SK-N-SH (cell line): ENCODE measurements at regions of chr1 and their contacts with region 1.

Region 1: GRCh38 chr1:110780600-110781484 is 92.1 kb upstream of the CD53 start:
- DNase-seq: peak; percentile 69
- H3K4me3 ChIP-seq: no peak overlapping the region; a peak in 1 of 4 replicates
- H3K27ac ChIP-seq: no peak overlapping the region
- H3K4me1 ChIP-seq: no peaks in the 10 kb centered on the region; a peak in 1 of 4 replicates
- H3K27me3 ChIP-seq: no peaks in the 10 kb centered on the region; the same call in 1 of the 2 replicates
- CTCF ChIP-seq: peak; percentile 75
- EP300 ChIP-seq: no peak
- RAD21 ChIP-seq: peak; percentile 79

Region 2: GRCh38 chr1:110214516-110215379 is 566.1 kb before region 1 on chr1:
- CTCF ChIA-PET with region 1: no interaction called
- POLR2A ChIA-PET with region 1: no interaction called
- DNase-seq: peak; percentile 57
- H3K4me3 ChIP-seq: no peak overlapping the region
- H3K27ac ChIP-seq: peak overlapping the region in 1 of 2 experiments; percentile 11; a peak in 1 of 4 replicates
- H3K4me1 ChIP-seq: peaks cover 0 to 52% of the 10 kb centered on the region in 2 experiments; a peak in 2 of 4 replicates
- H3K27me3 ChIP-seq: peaks cover 23% of the 10 kb centered on the region
- CTCF ChIP-seq: no peak
- EP300 ChIP-seq: no peak
- RAD21 ChIP-seq: no peak

Region 3: DNA sequence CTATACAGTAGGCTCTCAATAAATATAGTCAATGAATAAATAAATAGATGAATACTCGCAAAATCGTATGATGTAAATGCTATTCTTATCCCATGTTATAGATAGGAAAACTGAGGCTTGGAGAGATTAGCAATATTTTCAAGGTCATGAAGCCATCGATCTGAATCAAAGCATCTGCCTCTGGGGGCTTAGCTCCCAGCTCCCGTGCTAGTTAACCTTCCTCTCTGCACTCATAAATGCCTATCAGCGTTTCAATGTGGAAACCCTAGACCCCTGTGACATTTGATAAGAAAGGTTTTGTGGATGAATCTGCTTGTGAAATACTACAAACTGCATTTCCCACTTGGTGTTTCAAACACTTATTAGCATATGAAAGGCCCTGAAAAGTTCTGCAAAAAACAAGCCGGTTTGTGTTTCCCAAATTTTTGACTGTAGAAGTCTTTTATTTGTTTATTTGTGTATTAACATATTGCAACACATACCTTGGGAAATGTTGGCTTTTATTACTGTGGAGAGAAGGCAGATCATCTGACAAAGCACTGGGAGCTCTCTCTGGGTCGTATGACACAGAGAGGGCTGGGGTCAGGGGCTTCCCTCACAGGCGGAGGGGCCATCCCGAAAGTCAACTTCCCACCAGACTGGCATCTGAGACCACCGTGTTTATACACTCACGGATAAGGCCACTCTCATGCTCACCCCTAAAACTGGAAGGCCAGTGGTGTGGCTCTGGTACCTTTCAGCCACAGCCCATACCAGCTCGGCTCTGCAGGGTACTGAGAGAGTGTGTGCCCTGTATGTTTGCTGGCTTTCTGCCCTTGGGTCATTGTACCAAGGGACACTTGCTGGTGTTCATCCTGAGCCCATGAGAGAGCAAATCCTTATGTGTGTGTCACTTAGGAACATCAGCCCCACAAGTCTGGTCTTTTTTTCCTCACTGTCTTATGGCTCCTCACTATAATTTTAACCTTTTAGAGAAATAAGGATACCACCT is 330.9 kb before region 1 on chr1:
- CTCF ChIA-PET with region 1: no interaction called
- POLR2A ChIA-PET with region 1: no interaction called
- DNase-seq: no peak
- H3K4me3 ChIP-seq: no peak overlapping the region
- H3K27ac ChIP-seq: no peak overlapping the region
- H3K4me1 ChIP-seq: no peaks in the 10 kb centered on the region
- H3K27me3 ChIP-seq: peaks cover 52% of the 10 kb centered on the region
- CTCF ChIP-seq: no peak
- EP300 ChIP-seq: no peak
- RAD21 ChIP-seq: no peak

Region 4: DNA sequence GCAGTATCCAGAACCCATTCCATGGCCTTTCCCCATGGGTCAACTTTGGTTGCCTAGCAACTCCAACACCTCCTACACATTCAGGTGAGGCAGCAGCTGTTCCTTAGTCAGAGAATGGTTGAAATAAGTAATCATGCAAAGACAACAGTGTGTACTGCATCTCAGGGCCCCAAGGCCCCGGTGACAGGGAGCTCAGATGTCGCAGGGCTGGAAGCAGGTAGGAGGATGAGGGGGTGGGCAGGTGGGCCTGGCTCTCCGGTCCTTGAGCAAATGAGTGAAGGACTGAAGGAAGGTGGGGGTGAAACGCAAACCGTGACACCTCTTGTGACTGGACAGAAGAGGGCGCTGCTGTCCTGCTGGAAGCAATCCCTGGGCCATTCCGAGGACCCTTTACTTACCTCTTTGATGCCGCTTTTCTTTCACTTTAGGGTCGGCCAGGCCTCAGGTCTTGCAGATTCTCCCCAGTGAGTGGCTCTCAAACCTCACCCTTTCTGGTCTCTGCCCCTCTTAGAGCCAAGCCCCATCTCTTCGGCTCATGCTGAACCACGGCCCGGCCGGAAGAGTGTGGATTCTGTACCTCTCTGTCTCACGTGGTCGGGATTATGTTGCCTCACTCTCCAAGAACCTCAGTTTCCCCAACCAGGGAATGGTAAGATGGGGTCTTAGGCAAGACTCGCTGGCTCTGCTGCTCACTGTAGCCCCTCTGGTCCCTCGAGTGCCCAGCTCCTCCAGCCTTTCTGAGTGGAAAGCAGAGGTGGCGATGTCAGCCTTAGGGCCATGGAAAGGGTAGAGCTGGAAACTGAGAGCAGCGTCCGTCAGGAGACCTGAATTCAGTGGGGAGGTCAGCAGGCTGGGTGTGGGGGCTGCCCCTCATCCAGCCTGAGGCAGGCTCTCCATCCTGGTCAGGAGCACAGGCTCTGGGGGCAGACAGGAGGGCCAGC is 256.3 kb before region 1 on chr1:
- CTCF ChIA-PET with region 1: interaction called, 63 read pairs
- POLR2A ChIA-PET with region 1: no interaction called
- DNase-seq: peak; percentile 80
- H3K4me3 ChIP-seq: no peak overlapping the region; a peak in 1 of 4 replicates
- H3K27ac ChIP-seq: no peak overlapping the region
- H3K4me1 ChIP-seq: no peaks in the 10 kb centered on the region; a peak in 1 of 4 replicates
- H3K27me3 ChIP-seq: no peaks in the 10 kb centered on the region; the same call in 1 of the 2 replicates
- CTCF ChIP-seq: peak; percentile 65
- EP300 ChIP-seq: no peak
- RAD21 ChIP-seq: peak; percentile 90

Region 5: DNA sequence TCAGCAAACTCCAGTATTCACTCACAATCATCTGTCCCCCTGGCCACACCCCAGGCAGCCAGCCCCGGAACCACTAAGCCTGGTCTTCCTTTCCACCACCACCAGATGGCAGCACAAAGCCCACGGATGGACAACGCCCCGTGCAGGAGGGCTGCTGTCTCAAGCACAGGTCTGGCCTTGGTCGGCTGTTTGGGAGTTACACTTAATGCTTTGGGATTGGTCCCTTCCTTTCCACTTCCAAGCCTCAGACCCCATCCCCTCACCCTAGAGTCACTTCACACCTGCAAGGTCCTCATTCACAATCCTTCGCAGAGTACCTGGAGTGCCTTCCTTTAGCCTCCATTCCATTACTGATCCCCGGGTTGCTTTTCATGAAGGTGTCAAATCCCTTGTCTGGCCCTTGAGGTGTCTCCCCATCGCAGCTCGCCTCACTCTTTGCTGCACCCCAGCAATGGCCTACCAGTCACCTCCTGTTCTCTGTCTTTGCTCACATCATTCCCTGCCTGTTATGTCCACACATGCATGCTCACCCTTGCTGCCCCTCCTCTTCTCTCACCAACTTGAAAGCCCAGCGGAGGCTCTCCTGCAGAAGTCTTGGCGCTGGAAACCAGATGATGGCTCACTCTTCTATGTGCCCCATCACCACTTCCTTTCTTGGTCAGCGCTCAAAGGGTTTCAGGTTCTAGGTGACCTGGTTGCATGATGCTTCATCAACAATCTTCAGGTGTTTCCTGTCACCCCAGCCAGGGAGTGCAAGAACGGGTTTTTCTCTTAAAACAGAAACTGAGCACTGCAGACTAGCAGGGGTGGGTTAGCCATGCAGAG is 149.8 kb before region 1 on chr1:
- CTCF ChIA-PET with region 1: interaction called, 197 read pairs
- POLR2A ChIA-PET with region 1: no interaction called
- DNase-seq: peak; percentile 78
- H3K4me3 ChIP-seq: no peak overlapping the region
- H3K27ac ChIP-seq: no peak overlapping the region
- H3K4me1 ChIP-seq: no peaks in the 10 kb centered on the region; a peak in 1 of 4 replicates
- H3K27me3 ChIP-seq: peaks cover 7% of the 10 kb centered on the region; the same call in 1 of the 2 replicates
- CTCF ChIP-seq: peak; percentile 78
- EP300 ChIP-seq: no peak
- RAD21 ChIP-seq: peak; percentile 84

Region 6: DNA sequence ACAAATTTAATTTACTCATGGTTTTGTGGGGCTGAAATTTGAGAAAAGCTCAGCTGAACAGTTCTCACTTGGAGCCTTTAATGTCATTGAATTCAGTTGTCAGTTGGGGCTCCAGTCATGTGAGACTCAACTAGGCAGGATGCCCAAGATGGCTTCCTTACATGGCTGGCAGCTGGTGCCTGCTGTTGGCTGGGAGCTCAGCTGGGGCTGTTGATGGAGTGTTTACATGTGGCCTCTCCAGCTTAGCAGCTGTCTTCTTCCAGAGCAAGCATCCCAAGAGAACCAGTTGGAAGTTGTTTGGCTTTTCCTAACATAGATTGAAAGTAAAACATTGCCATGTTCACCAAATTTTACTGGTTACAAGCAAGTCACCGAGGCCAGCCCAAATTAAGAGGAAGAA is 24.3 kb before region 1 on chr1:
- CTCF ChIA-PET with region 1: interaction called, 20 read pairs
- POLR2A ChIA-PET with region 1: no interaction called
- DNase-seq: no peak
- H3K4me3 ChIP-seq: no peak overlapping the region
- H3K27ac ChIP-seq: no peak overlapping the region
- H3K4me1 ChIP-seq: no peaks in the 10 kb centered on the region
- H3K27me3 ChIP-seq: no peaks in the 10 kb centered on the region; the same call in 1 of the 2 replicates
- CTCF ChIP-seq: no peak
- EP300 ChIP-seq: no peak
- RAD21 ChIP-seq: no peak

Region 7: DNA sequence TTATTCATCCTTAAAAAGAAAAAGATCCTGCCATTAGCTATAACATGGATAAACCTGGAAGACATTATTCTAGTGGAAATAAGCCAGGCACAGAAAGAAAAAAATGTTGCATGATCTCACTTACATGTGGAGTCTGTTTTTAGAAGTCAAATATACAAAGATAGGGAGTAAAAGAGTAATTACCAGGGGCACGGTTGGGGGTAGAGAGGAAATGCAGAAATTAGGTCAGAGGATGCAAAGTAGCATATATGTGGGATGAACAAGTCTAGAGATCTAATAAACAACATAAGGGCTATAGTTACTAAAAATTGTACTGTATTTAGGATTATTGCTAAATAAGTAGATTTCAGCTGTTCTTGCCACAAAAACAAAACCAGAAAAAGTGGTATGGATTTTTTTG is 30.7 kb after region 1 on chr1:
- CTCF ChIA-PET with region 1: interaction called, 10 read pairs
- POLR2A ChIA-PET with region 1: no interaction called
- DNase-seq: no peak
- H3K4me3 ChIP-seq: no peak overlapping the region
- H3K27ac ChIP-seq: no peak overlapping the region
- H3K4me1 ChIP-seq: no peaks in the 10 kb centered on the region
- H3K27me3 ChIP-seq: no peaks in the 10 kb centered on the region
- CTCF ChIP-seq: no peak
- EP300 ChIP-seq: no peak
- RAD21 ChIP-seq: no peak

Region 8: DNA sequence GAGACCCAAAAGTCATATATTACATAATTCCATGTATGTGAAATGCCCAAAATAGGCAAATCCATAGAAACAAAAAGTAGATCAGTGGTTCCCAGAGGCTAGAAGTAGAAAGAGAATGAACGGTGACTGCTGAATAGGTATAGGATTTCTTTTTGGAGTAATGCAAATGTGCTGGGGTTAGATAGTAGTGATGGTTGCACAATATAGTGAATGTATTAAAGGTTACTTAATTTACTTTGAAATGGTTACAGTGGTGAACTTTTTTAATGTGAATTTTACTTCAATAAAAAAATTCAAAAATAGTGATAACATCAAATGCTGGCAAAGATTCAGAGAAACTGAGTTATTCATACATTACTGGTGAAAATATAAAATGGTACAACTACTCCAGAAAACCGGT is 59.9 kb after region 1 on chr1:
- CTCF ChIA-PET with region 1: no interaction called
- POLR2A ChIA-PET with region 1: no interaction called
- DNase-seq: no peak
- H3K4me3 ChIP-seq: no peak overlapping the region
- H3K27ac ChIP-seq: no peak overlapping the region
- H3K4me1 ChIP-seq: no peaks in the 10 kb centered on the region
- H3K27me3 ChIP-seq: no peaks in the 10 kb centered on the region
- CTCF ChIP-seq: no peak
- EP300 ChIP-seq: no peak
- RAD21 ChIP-seq: no peak